GM12878 (cell line): ENCODE measurements at regions of chr1 and their contacts with region 1.

Region 1: GRCh38 chr1:173867753-173868265 is at the start of gene GAS5:
- DNase-seq: peak; percentile 99
- ATAC-seq: peak; percentile 80
- H3K4me3 ChIP-seq: peak within 1 kb of the TSS; percentile 91
- H3K27ac ChIP-seq: peak within 1 kb of the TSS; percentile 89
- H3K4me1 ChIP-seq: peaks cover 18% of the 10 kb centered on the region
- H3K27me3 ChIP-seq: no peaks in the 10 kb centered on the region
- CTCF ChIP-seq: no peak
- EP300 ChIP-seq: no peak
- POLR2A ChIP-seq: peak; percentile 98
- RAD21 ChIP-seq: no peak
- polyA plus RNA-seq, gene GAS5: 804 to 930 TPM

Region 2: DNA sequence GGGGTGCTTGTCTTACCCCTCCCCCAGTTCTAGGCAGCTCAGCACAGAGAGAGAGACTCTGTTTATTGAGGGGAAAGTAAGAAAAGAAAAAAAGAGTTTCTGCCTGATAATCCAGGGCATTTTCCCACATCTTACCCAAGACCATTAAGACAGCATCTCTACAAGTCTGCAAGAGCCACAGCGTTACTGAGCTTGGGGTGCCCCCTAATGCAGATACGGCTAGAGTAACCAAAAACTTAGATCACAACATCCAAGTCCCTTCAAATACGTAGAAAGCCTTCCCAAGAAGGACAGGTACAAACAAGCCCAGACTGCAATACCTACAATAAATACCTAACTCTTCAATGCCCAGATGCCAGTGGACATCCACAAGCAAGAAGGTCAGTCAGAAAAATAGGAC is 238.9 kb before region 1 on chr1:
- CTCF ChIA-PET with region 1: no interaction called
- POLR2A ChIA-PET with region 1: no interaction called
- RAD21 ChIA-PET with region 1: no interaction called
- SMC1A ChIA-PET with region 1: no interaction called
- in situ Hi-C with region 1: no loop called
- intact Hi-C with region 1: no loop called
- DNase-seq: no peak
- ATAC-seq: no peak
- H3K4me3 ChIP-seq: no peak overlapping the region
- H3K27ac ChIP-seq: no peak overlapping the region
- H3K4me1 ChIP-seq: no peaks in the 10 kb centered on the region
- H3K27me3 ChIP-seq: no peaks in the 10 kb centered on the region; a peak in 1 of 4 replicates
- CTCF ChIP-seq: peak in 1 of 3 experiments; percentile 10; a peak in 1 of 6 replicates
- EP300 ChIP-seq: no peak
- POLR2A ChIP-seq: no peak
- RAD21 ChIP-seq: no peak

Region 3: GRCh38 chr1:173824331-173825081 is 43.3 kb before region 1 on chr1 and contains the starts of genes CENPL and DARS2:
- CTCF ChIA-PET with region 1: interaction called, 6 read pairs
- POLR2A ChIA-PET with region 1: interaction called, 17 read pairs
- RAD21 ChIA-PET with region 1: interaction called, 6 read pairs
- SMC1A ChIA-PET with region 1: interaction called, 11 read pairs
- in situ Hi-C with region 1: no loop called
- intact Hi-C with region 1: loop called (anchors 2 kb)
- DNase-seq: peak; percentile 94
- ATAC-seq: peak; percentile 87
- H3K4me3 ChIP-seq: peak within 1 kb of the TSS; percentile 92
- H3K27ac ChIP-seq: peak within 1 kb of the TSS; percentile 91
- H3K4me1 ChIP-seq: no peaks in the 10 kb centered on the region; the same call in 1 of the 2 replicates
- H3K27me3 ChIP-seq: no peaks in the 10 kb centered on the region
- CTCF ChIP-seq: no peak
- EP300 ChIP-seq: no peak; a peak in 1 of 4 replicates
- POLR2A ChIP-seq: peak; percentile 83
- RAD21 ChIP-seq: no peak
- polyA plus RNA-seq, gene CENPL: 14.9 to 26.7 TPM
- polyA plus RNA-seq, gene DARS2: 23.9 to 25.2 TPM

Region 4: DNA sequence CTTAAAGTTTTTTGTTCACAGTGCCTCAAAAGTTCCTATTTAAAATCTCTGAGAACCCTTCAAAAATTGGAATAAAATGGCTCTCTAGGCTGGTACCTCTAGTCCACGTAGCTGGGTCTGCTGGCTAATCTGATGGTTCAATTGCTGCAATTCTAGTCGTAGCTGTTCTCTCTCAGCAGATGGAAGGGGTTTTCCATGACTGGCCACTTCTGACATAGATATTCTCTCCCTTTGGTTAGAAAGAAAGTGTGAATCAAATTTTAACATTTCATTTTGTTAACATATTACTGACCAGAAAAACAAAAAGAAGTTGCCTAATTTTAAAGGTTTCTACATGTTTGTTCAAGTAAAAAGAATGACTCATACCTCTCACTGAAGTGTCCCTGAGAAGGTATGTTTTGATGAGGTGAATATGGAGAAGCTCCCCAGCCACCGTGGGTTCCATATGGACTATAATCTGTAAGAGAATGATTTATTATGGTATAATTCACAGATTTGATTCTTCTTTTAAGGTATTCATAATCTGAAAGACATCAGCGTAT is 78.6 kb after region 1 on chr1:
- CTCF ChIA-PET with region 1: no interaction called
- POLR2A ChIA-PET with region 1: no interaction called
- RAD21 ChIA-PET with region 1: no interaction called
- SMC1A ChIA-PET with region 1: no interaction called
- in situ Hi-C with region 1: no loop called
- intact Hi-C with region 1: no loop called
- DNase-seq: no peak
- ATAC-seq: no peak
- H3K4me3 ChIP-seq: no peak overlapping the region
- H3K27ac ChIP-seq: no peak overlapping the region
- H3K4me1 ChIP-seq: no peaks in the 10 kb centered on the region
- H3K27me3 ChIP-seq: no peaks in the 10 kb centered on the region
- CTCF ChIP-seq: no peak
- EP300 ChIP-seq: no peak
- POLR2A ChIP-seq: no peak
- RAD21 ChIP-seq: no peak

Region 5: GRCh38 chr1:174005032-174005431 is 137.2 kb after region 1 on chr1:
- CTCF ChIA-PET with region 1: no interaction called
- POLR2A ChIA-PET with region 1: interaction called, 4 read pairs
- RAD21 ChIA-PET with region 1: interaction called, 4 read pairs
- SMC1A ChIA-PET with region 1: interaction called, 3 read pairs
- in situ Hi-C with region 1: no loop called
- intact Hi-C with region 1: loop called (anchors 10 kb)
- DNase-seq: peak; percentile 83
- ATAC-seq: peak; percentile 95
- H3K4me3 ChIP-seq: no peak overlapping the region
- H3K27ac ChIP-seq: peak overlapping the region; percentile 54
- H3K4me1 ChIP-seq: peaks cover 10% of the 10 kb centered on the region
- H3K27me3 ChIP-seq: no peaks in the 10 kb centered on the region
- CTCF ChIP-seq: no peak
- EP300 ChIP-seq: peak; percentile 32 to 70; a peak in 1 of 4 replicates
- POLR2A ChIP-seq: no peak
- RAD21 ChIP-seq: no peak

Region 6: DNA sequence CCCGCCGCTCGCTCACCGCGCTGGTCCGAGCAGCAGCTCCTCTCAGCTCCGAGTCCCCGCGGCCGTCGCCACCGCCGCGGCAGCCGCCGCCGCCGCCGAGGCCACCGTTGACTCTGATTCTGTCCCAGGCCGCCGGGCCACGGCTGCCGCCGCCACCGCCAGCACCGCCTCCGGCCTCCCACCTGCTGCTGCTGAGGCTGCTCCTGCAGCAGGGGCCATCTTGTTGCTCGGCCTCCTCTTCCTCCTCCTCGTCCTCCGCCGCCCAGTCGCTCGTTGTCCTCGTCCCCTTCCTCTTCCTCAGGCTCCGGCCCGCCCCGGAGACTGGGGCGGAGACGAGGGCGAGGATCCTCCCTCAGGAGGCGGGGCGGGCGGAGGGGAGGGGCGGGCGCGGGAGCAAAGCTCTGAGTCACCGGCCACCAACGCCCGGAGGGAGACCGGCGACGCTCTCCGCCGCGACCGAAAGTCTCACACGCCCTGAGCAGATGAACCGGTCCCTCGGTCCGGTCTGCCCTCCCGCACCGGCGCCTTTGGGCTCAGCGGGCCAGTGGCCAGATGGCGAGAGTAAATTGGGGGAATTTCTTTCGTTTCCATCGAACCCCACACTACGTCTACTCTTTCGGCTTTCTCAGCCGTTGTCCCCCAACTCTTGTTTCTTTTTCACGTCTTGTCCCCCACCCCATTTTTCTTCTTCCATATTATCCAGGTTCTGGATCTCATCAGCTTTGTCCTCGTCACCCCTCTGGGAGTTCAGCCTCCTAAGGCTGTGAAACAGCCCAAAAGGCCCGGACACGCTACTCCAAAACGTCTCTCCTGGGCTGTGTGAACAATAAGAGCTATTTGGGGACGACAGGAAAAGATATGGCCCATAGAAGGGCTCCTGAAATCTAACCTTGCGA is 154.5 kb after region 1 on chr1 and contains the start of gene RC3H1:
- CTCF ChIA-PET with region 1: no interaction called
- POLR2A ChIA-PET with region 1: interaction called, 4 read pairs
- RAD21 ChIA-PET with region 1: interaction called, 3 read pairs
- SMC1A ChIA-PET with region 1: interaction called, 6 read pairs
- in situ Hi-C with region 1: no loop called
- intact Hi-C with region 1: loop called (anchors 5 kb)
- DNase-seq: peak; percentile 53
- ATAC-seq: peak; percentile 90
- H3K4me3 ChIP-seq: peak within 1 kb of the TSS; percentile 99
- H3K27ac ChIP-seq: peak within 1 kb of the TSS; percentile 88
- H3K4me1 ChIP-seq: peaks cover 5% of the 10 kb centered on the region
- H3K27me3 ChIP-seq: no peaks in the 10 kb centered on the region
- CTCF ChIP-seq: no peak
- EP300 ChIP-seq: 0 out of 4 replicates have a peak, but pooled peaks of 1 of the 2 experiments have one; percentile 15
- POLR2A ChIP-seq: peak; percentile 97
- RAD21 ChIP-seq: no peak
- polyA plus RNA-seq, gene RC3H1: 1.4 to 3.2 TPM

Region 7: DNA sequence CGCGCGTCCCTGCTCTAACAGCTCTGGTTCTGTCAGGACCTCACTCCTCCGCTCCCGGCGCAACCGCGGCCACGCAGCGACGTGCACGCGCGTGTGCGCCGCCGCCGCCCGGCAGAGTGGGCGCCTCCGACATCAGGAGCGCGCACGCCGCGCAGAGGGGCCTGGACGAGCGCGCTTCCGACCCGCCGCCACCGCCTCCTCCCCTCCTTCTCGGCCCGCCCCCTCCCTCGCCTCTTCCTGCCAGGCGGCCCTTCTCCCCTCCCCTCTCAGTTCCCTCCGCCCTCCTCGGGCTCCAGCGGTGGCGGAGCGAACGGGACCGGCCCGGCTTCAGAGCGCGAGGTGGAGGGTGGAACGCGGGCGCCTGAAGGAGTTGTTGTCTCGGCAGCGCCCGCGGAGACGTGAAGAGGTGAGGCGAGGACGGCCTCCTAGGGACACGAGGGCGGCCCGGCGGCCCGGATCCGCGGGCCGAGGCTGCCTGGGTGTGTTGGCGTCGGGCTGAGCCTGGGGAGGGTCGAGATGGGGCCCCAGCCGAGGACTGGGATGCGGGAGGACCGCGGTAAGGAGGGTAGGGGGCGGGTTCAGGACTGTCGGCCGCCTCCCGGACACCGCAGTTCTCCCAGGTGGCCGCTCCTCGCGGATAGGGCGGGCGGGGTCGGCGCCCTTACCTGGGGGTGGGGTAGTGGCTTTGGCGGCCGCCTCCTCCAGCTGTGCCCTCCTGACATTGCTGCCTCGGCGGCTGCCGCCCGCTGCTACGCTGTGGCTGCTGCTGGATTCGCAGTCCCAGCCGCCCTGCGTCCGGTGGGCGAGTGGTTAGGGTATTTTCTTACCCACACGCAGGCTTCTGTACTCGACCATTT is 291.7 kb after region 1 on chr1 and contains the start of gene RABGAP1L:
- CTCF ChIA-PET with region 1: no interaction called
- POLR2A ChIA-PET with region 1: no interaction called
- RAD21 ChIA-PET with region 1: interaction called, 3 read pairs
- SMC1A ChIA-PET with region 1: no interaction called
- in situ Hi-C with region 1: no loop called
- intact Hi-C with region 1: loop called (anchors 5 kb)
- DNase-seq: peak; percentile 55
- ATAC-seq: peak; percentile 84
- H3K4me3 ChIP-seq: peak within 1 kb of the TSS; percentile 91
- H3K27ac ChIP-seq: peak within 1 kb of the TSS; percentile 93
- H3K4me1 ChIP-seq: peaks cover 31% of the 10 kb centered on the region
- H3K27me3 ChIP-seq: no peaks in the 10 kb centered on the region; a peak in 1 of 4 replicates
- CTCF ChIP-seq: no peak
- EP300 ChIP-seq: no peak
- POLR2A ChIP-seq: peak; percentile 96
- RAD21 ChIP-seq: 0 out of 2 replicates have a peak, but pooled peaks have one; percentile 6
- polyA plus RNA-seq, gene RABGAP1L: 92.3 to 130 TPM